ENCODE measurements at regions of chr2 and their contacts with region 1.

Region 1: DNA sequence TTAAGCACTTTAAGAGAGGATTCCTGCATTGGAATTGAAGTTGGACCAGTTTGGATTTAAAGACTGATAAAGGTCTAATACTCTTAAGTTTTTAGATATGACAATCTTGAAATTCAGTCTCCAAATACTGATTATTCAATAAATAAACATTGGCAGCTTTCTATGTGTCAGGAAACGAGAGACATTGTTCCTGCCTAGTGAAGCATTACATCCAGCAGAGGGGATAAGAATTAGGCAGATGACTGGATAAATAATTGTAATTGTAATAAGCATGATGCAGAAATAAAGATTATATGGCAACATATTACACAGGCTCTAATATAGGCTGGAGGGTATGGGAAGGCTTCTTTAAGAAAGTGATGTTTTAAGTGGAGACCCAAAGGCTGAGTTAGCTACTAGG is 226.5 kb upstream of the MMADHC start:
- DNase-seq: no peak
- H3K4me3 ChIP-seq: no peak overlapping the region
- H3K27ac ChIP-seq: no peak overlapping the region
- H3K4me1 ChIP-seq: no peaks in the 10 kb centered on the region
- H3K27me3 ChIP-seq: no peaks in the 10 kb centered on the region
- CTCF ChIP-seq: no peak
- EP300 ChIP-seq: no peak
- POLR2A ChIP-seq: no peak

Region 2: GRCh38 chr2:149119368-149119767 is 694.7 kb before region 1 on chr2:
- intact Hi-C with region 1: loop called in 1 of 4 experiments (anchors 5 kb)
- DNase-seq: no peak
- H3K4me3 ChIP-seq: no peak overlapping the region
- H3K27ac ChIP-seq: no peak overlapping the region
- H3K4me1 ChIP-seq: no peaks in the 10 kb centered on the region
- H3K27me3 ChIP-seq: no peaks in the 10 kb centered on the region
- CTCF ChIP-seq: no peak
- EP300 ChIP-seq: no peak
- POLR2A ChIP-seq: no peak